Vagina (tissue), 2 donors: ENCODE measurements at regions of chr11 and their contacts with region 1.

Region 1: GRCh38 chr11:3160252-3161031 is 4.7 kb downstream of the OSBPL5 start:
- DNase-seq: peak in 1 of 2 donors; percentile 96
- H3K4me3 ChIP-seq: peak overlapping the region; percentile 56 to 63
- H3K27ac ChIP-seq: peak overlapping the region; percentile 85
- H3K4me1 ChIP-seq: peaks cover 93% of the 10 kb centered on the region
- H3K27me3 ChIP-seq: no peaks in the 10 kb centered on the region
- CTCF ChIP-seq: no peak
- POLR2A ChIP-seq: peak in 1 of 2 donors; percentile 5

Region 2: GRCh38 chr11:2691991-2692875 is 468.2 kb before region 1 on chr11:
- intact Hi-C with region 1: no loop called
- DNase-seq: no peak
- H3K4me3 ChIP-seq: no peak overlapping the region
- H3K27ac ChIP-seq: no peak overlapping the region
- H3K4me1 ChIP-seq: peaks cover 87% of the 10 kb centered on the region
- H3K27me3 ChIP-seq: no peaks in the 10 kb centered on the region
- CTCF ChIP-seq: no peak
- POLR2A ChIP-seq: no peak

Region 3: GRCh38 chr11:3126207-3126862 is 34.1 kb before region 1 on chr11:
- intact Hi-C with region 1: loop called (anchors 5 kb)
- DNase-seq: no peak
- H3K4me3 ChIP-seq: no peak overlapping the region
- H3K27ac ChIP-seq: peak overlapping the region; percentile 72
- H3K4me1 ChIP-seq: peaks cover 63% of the 10 kb centered on the region
- H3K27me3 ChIP-seq: no peaks in the 10 kb centered on the region
- CTCF ChIP-seq: no peak
- POLR2A ChIP-seq: no peak